ENCODE measurements at regions of chr19 and their contacts with region 1.

Region 1: GRCh38 chr19:49097455-49098288 is 12.4 kb downstream of the SNRNP70 start:
- DNase-seq: peak; percentile 50
- ATAC-seq: peak; percentile 82
- H3K4me3 ChIP-seq: no peak overlapping the region
- H3K27ac ChIP-seq: 0 out of 2 replicates have a peak overlapping the region, but pooled peaks have one; percentile 8
- H3K4me1 ChIP-seq: peaks cover 0 to 3% of the 10 kb centered on the region in 2 experiments; a peak in 2 of 4 replicates
- H3K27me3 ChIP-seq: no peaks in the 10 kb centered on the region
- CTCF ChIP-seq: peak; percentile 81 to 100 (median 100)
- POLR2A ChIP-seq: no peak
- RAD21 ChIP-seq: peak; percentile 87

Region 2: GRCh38 chr19:49085020-49085867 is 12.4 kb before region 1 on chr19 and contains the start of gene SNRNP70:
- CTCF ChIA-PET with region 1: interaction called, 11 read pairs
- POLR2A ChIA-PET with region 1: interaction called, 5 read pairs
- RAD21 ChIA-PET with region 1: no interaction called
- intact Hi-C with region 1: no loop called
- DNase-seq: peak; percentile 98
- ATAC-seq: peak; percentile 96
- H3K4me3 ChIP-seq: peak within 1 kb of the TSS; percentile 86
- H3K27ac ChIP-seq: peak within 1 kb of the TSS; percentile 94
- H3K4me1 ChIP-seq: peaks cover 6 to 25% of the 10 kb centered on the region in 2 experiments
- H3K27me3 ChIP-seq: no peaks in the 10 kb centered on the region
- CTCF ChIP-seq: no peak
- POLR2A ChIP-seq: peak; percentile 46
- RAD21 ChIP-seq: no peak
- total RNA-seq, gene SNRNP70: 236 TPM

Region 3: DNA sequence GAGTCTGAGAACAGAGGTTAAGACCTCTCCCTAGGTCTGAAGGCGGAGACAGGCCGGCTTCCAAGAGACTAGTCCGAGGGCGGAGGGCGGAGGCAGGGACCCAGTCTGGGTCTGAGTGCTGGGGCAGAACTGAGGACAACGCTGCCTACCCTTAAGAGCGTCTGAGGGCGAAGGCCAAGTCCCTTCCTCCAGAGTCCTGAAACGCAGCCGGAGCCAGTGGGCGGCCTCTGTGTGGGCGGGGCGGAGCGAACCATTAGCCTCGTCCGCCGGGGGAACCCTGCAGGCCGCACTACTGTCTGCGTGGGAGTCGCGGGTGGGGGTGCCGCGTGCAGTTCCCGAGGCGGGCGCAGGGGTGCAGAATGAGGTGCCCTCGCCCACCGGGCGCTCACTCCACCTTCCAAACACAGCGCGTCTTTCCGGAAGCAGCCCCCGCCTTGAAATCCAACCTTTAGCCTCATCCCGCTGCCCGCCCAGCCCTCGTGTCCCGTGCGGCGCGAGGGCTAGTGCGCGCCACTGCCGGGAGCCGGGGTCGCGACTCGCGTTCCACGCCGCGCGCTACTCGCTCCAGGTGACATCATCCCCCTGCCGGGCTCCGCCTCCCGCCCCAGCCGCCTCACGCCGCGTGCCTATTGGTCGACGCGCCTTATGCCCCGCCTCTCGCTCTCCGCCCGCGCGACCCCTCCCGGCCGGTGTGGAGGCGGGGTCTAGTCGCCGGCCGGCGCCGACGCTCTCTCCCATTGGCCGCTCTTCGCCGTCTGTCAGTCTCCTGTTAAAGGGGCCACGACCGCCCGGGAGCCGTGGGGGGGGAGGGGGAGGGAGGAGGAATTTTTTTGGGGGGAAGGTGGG is 21.1 kb after region 1 on chr19 and contains the start of gene C19orf73:
- CTCF ChIA-PET with region 1: interaction called, 28 read pairs
- POLR2A ChIA-PET with region 1: no interaction called
- RAD21 ChIA-PET with region 1: interaction called in 1 of 2 experiments, 3 read pairs
- intact Hi-C with region 1: no loop called
- DNase-seq: peak; percentile 84
- ATAC-seq: peak; percentile 81
- H3K4me3 ChIP-seq: peak within 1 kb of the TSS; percentile 59 to 66
- H3K27ac ChIP-seq: peak within 1 kb of the TSS; percentile 97
- H3K4me1 ChIP-seq: peaks cover 18 to 37% of the 10 kb centered on the region in 2 experiments
- H3K27me3 ChIP-seq: no peaks in the 10 kb centered on the region
- CTCF ChIP-seq: no peak
- POLR2A ChIP-seq: peak; percentile 87
- RAD21 ChIP-seq: no peak
- total RNA-seq, gene C19orf73: 2.2 TPM

Region 4: GRCh38 chr19:49127674-49128544 is 30.2 kb after region 1 on chr19:
- CTCF ChIA-PET with region 1: interaction called, 11 read pairs
- POLR2A ChIA-PET with region 1: no interaction called
- RAD21 ChIA-PET with region 1: no interaction called
- intact Hi-C with region 1: no loop called
- DNase-seq: peak; percentile 95
- ATAC-seq: peak; percentile 94
- H3K4me3 ChIP-seq: peak overlapping the region; percentile 40 to 60
- H3K27ac ChIP-seq: peak overlapping the region; percentile 60
- H3K4me1 ChIP-seq: peaks cover 12 to 21% of the 10 kb centered on the region in 2 experiments
- H3K27me3 ChIP-seq: no peaks in the 10 kb centered on the region
- CTCF ChIP-seq: 0 out of 6 replicates have a peak, but pooled peaks of 1 of the 3 experiments have one; percentile 10
- POLR2A ChIP-seq: no peak
- RAD21 ChIP-seq: no peak

Region 5: GRCh38 chr19:49148784-49149651 is 51.3 kb after region 1 on chr19:
- CTCF ChIA-PET with region 1: interaction called, 17 read pairs
- POLR2A ChIA-PET with region 1: interaction called, 4 read pairs
- RAD21 ChIA-PET with region 1: interaction called in 1 of 2 experiments, 6 read pairs
- intact Hi-C with region 1: loop called (anchors 1 kb)
- DNase-seq: peak; percentile 88
- ATAC-seq: peak; percentile 51
- H3K4me3 ChIP-seq: peak overlapping the region; percentile 90 to 95
- H3K27ac ChIP-seq: peak overlapping the region; percentile 94
- H3K4me1 ChIP-seq: peaks cover 25 to 57% of the 10 kb centered on the region in 2 experiments
- H3K27me3 ChIP-seq: no peaks in the 10 kb centered on the region
- CTCF ChIP-seq: no peak
- POLR2A ChIP-seq: peak; percentile 49
- RAD21 ChIP-seq: no peak

Region 6: GRCh38 chr19:49182848-49183344 is 85.2 kb after region 1 on chr19:
- CTCF ChIA-PET with region 1: no interaction called
- POLR2A ChIA-PET with region 1: no interaction called
- RAD21 ChIA-PET with region 1: no interaction called
- intact Hi-C with region 1: no loop called
- DNase-seq: no peak
- ATAC-seq: no peak
- H3K4me3 ChIP-seq: no peak overlapping the region
- H3K27ac ChIP-seq: no peak overlapping the region
- H3K4me1 ChIP-seq: no peaks in the 10 kb centered on the region
- H3K27me3 ChIP-seq: no peaks in the 10 kb centered on the region
- CTCF ChIP-seq: no peak
- POLR2A ChIP-seq: no peak
- RAD21 ChIP-seq: no peak

Region 7: GRCh38 chr19:49210108-49210900 is 112.6 kb after region 1 on chr19:
- CTCF ChIA-PET with region 1: interaction called, 34 read pairs
- POLR2A ChIA-PET with region 1: no interaction called
- RAD21 ChIA-PET with region 1: interaction called, 3 to 5 read pairs
- intact Hi-C with region 1: no loop called
- DNase-seq: no peak
- ATAC-seq: peak; percentile 71
- H3K4me3 ChIP-seq: no peak overlapping the region
- H3K27ac ChIP-seq: no peak overlapping the region
- H3K4me1 ChIP-seq: peaks cover 10 to 13% of the 10 kb centered on the region in 2 experiments
- H3K27me3 ChIP-seq: no peaks in the 10 kb centered on the region
- CTCF ChIP-seq: no peak
- POLR2A ChIP-seq: no peak
- RAD21 ChIP-seq: no peak

Region 8: DNA sequence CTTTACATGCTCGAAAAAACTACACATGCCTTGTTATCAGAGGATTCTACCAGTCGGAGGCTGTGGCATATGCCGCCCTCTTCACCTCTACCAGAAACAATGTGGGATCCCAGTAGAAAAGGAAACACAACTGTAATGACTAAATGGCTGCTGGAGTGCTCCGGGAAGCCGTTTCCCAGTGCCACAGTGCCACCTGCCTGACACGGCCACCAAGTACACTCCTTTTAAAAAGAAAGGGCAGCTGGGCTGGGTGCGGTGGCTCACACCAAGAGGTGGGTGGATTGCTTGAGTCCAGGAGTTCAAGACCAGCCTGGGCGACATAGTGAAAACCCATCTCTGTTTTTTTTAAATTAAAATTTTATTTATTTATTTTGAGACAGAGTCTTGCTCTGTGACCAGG is 127.2 kb after region 1 on chr19:
- CTCF ChIA-PET with region 1: interaction called, 9 read pairs
- POLR2A ChIA-PET with region 1: no interaction called
- RAD21 ChIA-PET with region 1: no interaction called
- intact Hi-C with region 1: loop called (anchors 2 kb)
- DNase-seq: peak; percentile 61
- ATAC-seq: peak; percentile 87
- H3K4me3 ChIP-seq: no peak overlapping the region
- H3K27ac ChIP-seq: no peak overlapping the region
- H3K4me1 ChIP-seq: peaks cover 7 to 20% of the 10 kb centered on the region in 2 experiments; a peak in 3 of 4 replicates
- H3K27me3 ChIP-seq: no peaks in the 10 kb centered on the region
- CTCF ChIP-seq: peak; percentile 61 to 82 (median 67)
- POLR2A ChIP-seq: no peak
- RAD21 ChIP-seq: peak; percentile 93

Region 9: GRCh38 chr19:49255674-49256073 is 158.0 kb after region 1 on chr19:
- CTCF ChIA-PET with region 1: no interaction called
- POLR2A ChIA-PET with region 1: no interaction called
- RAD21 ChIA-PET with region 1: no interaction called
- intact Hi-C with region 1: no loop called
- DNase-seq: no peak
- ATAC-seq: no peak
- H3K4me3 ChIP-seq: no peak overlapping the region
- H3K27ac ChIP-seq: no peak overlapping the region
- H3K4me1 ChIP-seq: no peaks in the 10 kb centered on the region
- H3K27me3 ChIP-seq: no peaks in the 10 kb centered on the region
- CTCF ChIP-seq: no peak
- POLR2A ChIP-seq: no peak
- RAD21 ChIP-seq: no peak

Region 10: DNA sequence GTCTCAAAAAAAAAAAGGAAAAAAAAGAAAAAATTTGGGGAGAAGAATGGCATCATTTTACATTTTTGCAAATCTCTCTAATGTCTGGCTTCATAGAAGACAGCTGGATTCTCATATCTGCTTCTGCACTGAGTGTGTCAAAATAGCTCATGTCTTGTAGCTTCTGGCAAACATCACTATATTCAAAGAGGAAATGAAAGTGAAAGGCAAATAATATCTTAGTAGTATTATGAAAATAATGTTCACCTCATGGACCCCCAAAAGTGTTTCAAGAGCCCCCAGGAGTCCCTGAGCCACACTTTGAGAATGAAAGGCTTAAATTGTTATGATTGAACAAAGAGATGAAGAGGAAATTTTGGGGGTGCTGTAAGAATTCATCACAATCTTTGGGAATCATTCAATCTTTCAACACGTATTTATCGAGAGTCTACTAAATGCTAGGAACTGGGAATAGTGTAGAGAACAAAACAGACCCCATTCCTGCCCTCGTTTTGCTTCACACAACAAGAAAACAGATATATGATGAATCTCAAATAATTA is 228.6 kb after region 1 on chr19:
- CTCF ChIA-PET with region 1: no interaction called
- POLR2A ChIA-PET with region 1: no interaction called
- RAD21 ChIA-PET with region 1: no interaction called
- intact Hi-C with region 1: no loop called
- DNase-seq: no peak
- ATAC-seq: no peak
- H3K4me3 ChIP-seq: no peak overlapping the region
- H3K27ac ChIP-seq: no peak overlapping the region
- H3K4me1 ChIP-seq: no peaks in the 10 kb centered on the region
- H3K27me3 ChIP-seq: no peaks in the 10 kb centered on the region
- CTCF ChIP-seq: no peak
- POLR2A ChIP-seq: no peak
- RAD21 ChIP-seq: no peak